H1 (cell line): ENCODE measurements at regions of chr14 and their contacts with region 1.

Region 1: DNA sequence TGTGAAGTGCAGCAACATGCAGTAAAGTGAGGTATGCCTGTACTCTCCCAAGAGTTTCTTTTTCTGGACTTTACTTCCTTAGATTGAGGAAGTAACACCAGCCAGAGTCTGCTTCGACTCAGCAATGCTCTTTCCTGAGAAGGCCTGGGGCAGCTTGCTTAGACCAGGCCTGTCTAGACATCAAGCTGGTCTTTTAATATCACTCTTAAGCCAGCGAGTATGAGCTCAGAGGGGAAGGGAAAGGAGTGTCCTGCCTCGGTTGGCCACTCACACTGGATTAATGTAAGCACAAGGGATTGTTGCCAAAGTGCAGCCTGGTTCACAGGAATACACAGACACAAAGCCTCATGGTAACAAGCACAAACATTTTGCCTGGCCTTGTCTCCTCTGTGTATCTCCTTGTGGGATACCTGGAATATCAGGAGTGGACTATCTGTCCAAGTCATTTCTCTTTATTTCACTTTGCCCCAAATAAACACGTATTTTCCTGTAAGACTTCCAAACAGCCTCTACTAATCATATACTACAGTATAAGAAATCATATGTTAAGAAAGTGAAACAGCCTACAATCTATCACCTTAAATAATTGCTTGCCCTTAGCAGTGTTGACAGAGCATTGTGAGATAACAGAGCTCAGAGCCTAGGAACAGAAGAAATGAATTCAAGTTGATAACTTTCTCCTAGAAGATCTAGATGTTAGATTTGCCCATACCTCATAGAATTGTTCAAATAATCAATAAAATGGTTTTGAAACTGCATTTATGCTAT is 121.2 kb upstream of the DAAM1 start:
- DNase-seq: no peak
- H3K4me3 ChIP-seq: no peak overlapping the region
- H3K27ac ChIP-seq: no peak overlapping the region
- H3K4me1 ChIP-seq: no peaks in the 10 kb centered on the region
- H3K27me3 ChIP-seq: no peaks in the 10 kb centered on the region
- CTCF ChIP-seq: no peak
- EP300 ChIP-seq: no peak
- POLR2A ChIP-seq: no peak
- RAD21 ChIP-seq: no peak

Region 2: GRCh38 chr14:59055439-59056045 is 11.8 kb before region 1 on chr14:
- CTCF ChIA-PET with region 1: interaction called, 13 read pairs
- POLR2A ChIA-PET with region 1: no interaction called
- DNase-seq: no peak
- H3K4me3 ChIP-seq: no peak overlapping the region
- H3K27ac ChIP-seq: no peak overlapping the region
- H3K4me1 ChIP-seq: no peaks in the 10 kb centered on the region
- H3K27me3 ChIP-seq: no peaks in the 10 kb centered on the region
- CTCF ChIP-seq: peak in 2 of 3 experiments; percentile 56 to 63; a peak in 3 of 4 replicates
- EP300 ChIP-seq: no peak
- POLR2A ChIP-seq: no peak
- RAD21 ChIP-seq: peak; percentile 87 to 89